ENCODE measurements at regions of chr7 and their contacts with region 1.

Region 1: DNA sequence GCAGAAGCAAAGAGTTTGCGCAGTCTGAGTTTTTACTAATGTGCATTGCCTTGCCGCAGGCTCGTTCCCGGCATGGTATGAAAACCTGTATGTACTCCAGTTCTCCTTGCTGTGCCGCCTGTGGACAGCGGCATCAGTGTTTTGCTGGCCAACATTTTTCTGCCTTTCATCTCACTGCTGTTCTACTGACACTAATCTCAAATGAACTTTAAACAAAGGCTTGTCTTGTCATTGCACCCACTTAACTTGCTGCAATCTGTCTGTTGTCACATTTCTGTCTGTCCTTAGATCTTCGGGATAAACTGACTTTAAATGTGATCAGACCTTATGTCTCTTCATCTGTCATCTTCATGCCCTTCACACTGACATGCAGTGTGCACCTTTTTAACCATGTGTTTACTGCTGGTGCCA is 71.7 kb upstream of the ZNRF2 start:
- DNase-seq: peak in 1 of 10 donors; percentile 43
- H3K4me3 ChIP-seq: peak overlapping the region in 29 of 59 donors; percentile 2 to 47 (median 19)
- H3K27ac ChIP-seq: peak overlapping the region in 4 of 59 donors; percentile 14 to 38 (median 26)
- H3K27me3 ChIP-seq: no peaks in the 10 kb centered on the region
- CTCF ChIP-seq: peak in 2 of 56 donors; percentile 14 to 18

Region 2: GRCh38 chr7:30178748-30179436 is 33.8 kb before region 1 on chr7:
- intact Hi-C with region 1: loop called in 1 of 2 experiments (anchors 5 kb)
- DNase-seq: no peak
- H3K4me3 ChIP-seq: no peak overlapping the region
- H3K27ac ChIP-seq: no peak overlapping the region
- H3K27me3 ChIP-seq: no peaks in the 10 kb centered on the region
- CTCF ChIP-seq: no peak

Region 3: DNA sequence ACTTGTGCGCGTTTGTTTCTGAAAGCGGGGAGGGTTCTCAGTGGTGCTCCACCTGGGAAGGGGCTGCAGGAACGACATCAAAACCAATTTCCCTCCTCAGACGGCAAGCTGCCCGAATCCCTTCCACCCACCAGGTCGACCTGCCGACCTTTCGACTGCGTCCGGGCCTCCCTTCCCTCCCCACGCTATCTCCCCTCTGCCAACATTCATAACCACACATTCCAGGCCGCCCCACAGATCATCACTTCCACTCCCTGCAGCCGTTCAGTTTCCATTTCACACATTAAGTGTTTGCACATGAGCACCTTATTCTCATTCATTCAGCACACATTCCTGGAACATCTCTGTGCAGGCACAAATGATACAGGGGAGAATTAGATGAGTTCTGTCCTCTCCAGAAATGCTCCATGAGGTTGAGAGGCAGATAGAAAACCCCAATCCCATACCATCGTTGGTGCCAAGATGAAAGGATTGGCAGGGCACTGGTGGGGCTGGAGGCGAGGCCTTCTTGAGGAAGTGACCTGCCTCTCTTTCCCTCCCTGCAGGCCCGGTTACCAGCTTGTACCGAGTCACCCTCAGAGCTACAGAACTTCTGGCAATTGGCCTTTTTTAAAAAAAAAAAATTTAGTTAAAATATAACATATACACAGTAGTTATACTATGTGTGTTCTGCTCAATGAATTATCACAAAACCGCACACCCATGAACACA is 628.5 kb after region 1 on chr7:
- intact Hi-C with region 1: no loop called
- DNase-seq: no peak
- H3K4me3 ChIP-seq: no peak overlapping the region
- H3K27ac ChIP-seq: no peak overlapping the region
- H3K27me3 ChIP-seq: no peaks in the 10 kb centered on the region
- CTCF ChIP-seq: no peak

Measured in dorsolateral prefrontal cortex (tissue), 120 donors.